ENCODE measurements at regions of chr17 and their contacts with region 1.

Region 1: DNA sequence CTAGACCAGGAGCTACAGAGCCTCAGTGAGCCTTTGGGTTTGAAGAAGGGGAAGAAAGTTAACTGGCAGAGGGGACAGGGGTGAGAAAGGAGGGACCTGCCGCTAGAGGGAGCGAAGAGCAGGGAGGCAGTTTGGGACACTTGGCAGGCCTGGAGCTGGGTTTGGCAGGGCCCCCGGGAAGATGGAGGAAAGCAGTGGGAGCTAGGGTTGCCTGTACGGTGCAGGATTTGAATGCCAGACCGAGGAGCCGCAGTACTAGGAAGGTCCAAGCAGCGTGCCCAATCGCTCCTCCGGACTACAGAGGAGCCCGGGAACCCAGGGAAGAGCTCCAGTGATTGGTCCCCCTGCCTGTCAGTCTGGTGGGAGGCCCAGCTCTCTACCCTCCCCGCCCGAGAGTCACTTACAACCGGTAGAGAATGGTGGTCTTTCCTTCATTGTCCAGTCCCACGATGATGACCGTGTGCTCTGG is 1.3 kb downstream of the ARL5C start:
- DNase-seq: peak; percentile 77 to 83 (median 78)
- H3K4me3 ChIP-seq: peak overlapping the region; percentile 56 to 92 (median 72)
- H3K4me3 Mint-ChIP-seq: peak overlapping the region; percentile 98 to 99
- H3K27ac ChIP-seq: peak overlapping the region; percentile 3 to 46
- H3K27ac Mint-ChIP-seq: peak overlapping the region; percentile 46 to 88 (median 77)
- H3K4me1 ChIP-seq: peaks cover 62 to 72% of the 10 kb centered on the region in 2 donors
- H3K4me1 Mint-ChIP-seq: peaks cover 67% of the 10 kb centered on the region
- H3K27me3 ChIP-seq: no peaks in the 10 kb centered on the region
- H3K27me3 Mint-ChIP-seq: peaks cover under 1 to 3% (median 2%) of the 10 kb centered on the region in 3 donors
- CTCF ChIP-seq: peak; percentile 95

Region 2: GRCh38 chr17:38982858-38983746 is 181.6 kb before region 1 on chr17:
- intact Hi-C with region 1: loop called in 1 of 2 experiments (anchors 5 kb)
- DNase-seq: peak; percentile 38 to 69 (median 55)
- H3K4me3 ChIP-seq: no peak overlapping the region
- H3K4me3 Mint-ChIP-seq: no peak overlapping the region
- H3K27ac ChIP-seq: no peak overlapping the region
- H3K27ac Mint-ChIP-seq: peak overlapping the region in 1 of 7 donors; percentile 72
- H3K4me1 ChIP-seq: peaks cover 6 to 7% of the 10 kb centered on the region in 2 donors
- H3K4me1 Mint-ChIP-seq: no peaks in the 10 kb centered on the region
- H3K27me3 ChIP-seq: no peaks in the 10 kb centered on the region
- H3K27me3 Mint-ChIP-seq: peaks cover 2 to 21% (median 6%) of the 10 kb centered on the region in 3 donors
- CTCF ChIP-seq: peak; percentile 82

Region 3: GRCh38 chr17:39027455-39028035 is 137.2 kb before region 1 on chr17:
- intact Hi-C with region 1: no loop called
- DNase-seq: no peak
- H3K4me3 ChIP-seq: no peak overlapping the region
- H3K4me3 Mint-ChIP-seq: peak overlapping the region in 1 of 2 donors; percentile 69
- H3K27ac ChIP-seq: no peak overlapping the region
- H3K27ac Mint-ChIP-seq: no peak overlapping the region
- H3K4me1 ChIP-seq: peaks cover 3 to 7% of the 10 kb centered on the region in 2 donors
- H3K4me1 Mint-ChIP-seq: peaks cover 7% of the 10 kb centered on the region
- H3K27me3 ChIP-seq: peaks cover 23 to 32% of the 10 kb centered on the region in 2 donors
- H3K27me3 Mint-ChIP-seq: peaks cover 30 to 51% (median 39%) of the 10 kb centered on the region in 3 donors
- CTCF ChIP-seq: no peak

Region 4: GRCh38 chr17:39199820-39200069 is 35.0 kb after region 1 on chr17:
- intact Hi-C with region 1: loop called (anchors 2 to 5 kb)
- DNase-seq: peak; percentile 90 to 93 (median 93)
- H3K4me3 ChIP-seq: peak overlapping the region; percentile 61 to 91 (median 90)
- H3K4me3 Mint-ChIP-seq: peak overlapping the region; percentile 97 to 99
- H3K27ac ChIP-seq: peak overlapping the region; percentile 82 to 100
- H3K27ac Mint-ChIP-seq: peak overlapping the region; percentile 97 to 100 (median 99)
- H3K4me1 ChIP-seq: peaks cover 51 to 63% of the 10 kb centered on the region in 2 donors
- H3K4me1 Mint-ChIP-seq: peaks cover 47% of the 10 kb centered on the region
- H3K27me3 ChIP-seq: no peaks in the 10 kb centered on the region
- H3K27me3 Mint-ChIP-seq: peaks cover 0 to 3% (median 0%) of the 10 kb centered on the region in 3 donors
- CTCF ChIP-seq: no peak

Region 5: GRCh38 chr17:39235555-39236449 is 71.1 kb after region 1 on chr17:
- intact Hi-C with region 1: loop called (anchors 10 kb)
- DNase-seq: peak; percentile 18 to 38 (median 37)
- H3K4me3 ChIP-seq: no peak overlapping the region
- H3K4me3 Mint-ChIP-seq: no peak overlapping the region
- H3K27ac ChIP-seq: no peak overlapping the region
- H3K27ac Mint-ChIP-seq: no peak overlapping the region
- H3K4me1 ChIP-seq: peaks cover 16 to 22% of the 10 kb centered on the region in 2 donors
- H3K4me1 Mint-ChIP-seq: peaks cover 32% of the 10 kb centered on the region
- H3K27me3 ChIP-seq: peaks cover 0 to 25% of the 10 kb centered on the region in 2 donors
- H3K27me3 Mint-ChIP-seq: peaks cover 11 to 37% (median 24%) of the 10 kb centered on the region in 3 donors
- CTCF ChIP-seq: peak; percentile 78

Region 6: GRCh38 chr17:39244600-39245570 is 80.2 kb after region 1 on chr17:
- intact Hi-C with region 1: loop called in 1 of 2 experiments (anchors 10 kb)
- DNase-seq: peak; percentile 65 to 78 (median 73)
- H3K4me3 ChIP-seq: no peak overlapping the region
- H3K4me3 Mint-ChIP-seq: no peak overlapping the region
- H3K27ac ChIP-seq: no peak overlapping the region
- H3K27ac Mint-ChIP-seq: peak overlapping the region in 1 of 7 donors; percentile 10
- H3K4me1 ChIP-seq: peaks cover 0 to 7% of the 10 kb centered on the region in 2 donors
- H3K4me1 Mint-ChIP-seq: peaks cover 11% of the 10 kb centered on the region
- H3K27me3 ChIP-seq: peaks cover 0 to under 1% of the 10 kb centered on the region in 2 donors
- H3K27me3 Mint-ChIP-seq: peaks cover 3 to 10% (median 4%) of the 10 kb centered on the region in 3 donors
- CTCF ChIP-seq: peak; percentile 98

Measured in CD14-positive monocyte (primary cell).